ENCODE measurements at regions of chr14 and their contacts with region 1.

Region 1: GRCh38 chr14:74612350-74613021 is 449 bp upstream of the LTBP2 start:
- DNase-seq: peak; percentile 51
- ATAC-seq: peak; percentile 83
- H3K4me3 ChIP-seq: peak overlapping the region; percentile 57 to 86 (median 71)
- H3K27ac ChIP-seq: no peak overlapping the region
- H3K4me1 ChIP-seq: peaks cover 25% of the 10 kb centered on the region
- H3K27me3 ChIP-seq: peaks cover 1 to 19% of the 10 kb centered on the region in 2 experiments; a peak in 4 of 5 replicates
- CTCF ChIP-seq: peak; percentile 74
- EP300 ChIP-seq: no peak
- POLR2A ChIP-seq: no peak
- RAD21 ChIP-seq: peak; percentile 69

Region 2: GRCh38 chr14:74501135-74501614 is 111.3 kb before region 1 on chr14:
- CTCF ChIA-PET with region 1: interaction called, 7 read pairs
- POLR2A ChIA-PET with region 1: no interaction called
- in situ Hi-C with region 1: no loop called
- intact Hi-C with region 1: loop called (anchors 5 kb)
- DNase-seq: peak; percentile 52
- ATAC-seq: peak; percentile 82
- H3K4me3 ChIP-seq: no peak overlapping the region
- H3K27ac ChIP-seq: no peak overlapping the region
- H3K4me1 ChIP-seq: no peaks in the 10 kb centered on the region
- H3K27me3 ChIP-seq: peaks cover 0 to 16% of the 10 kb centered on the region in 2 experiments; a peak in 2 of 5 replicates
- CTCF ChIP-seq: peak; percentile 72
- EP300 ChIP-seq: no peak
- POLR2A ChIP-seq: no peak
- RAD21 ChIP-seq: peak; percentile 49; the same call in 1 of the 2 replicates

Region 3: GRCh38 chr14:74712499-74713394 is 100.3 kb after region 1 on chr14 and contains the starts of genes AREL1 and FCF1:
- CTCF ChIA-PET with region 1: interaction called, 8 read pairs
- POLR2A ChIA-PET with region 1: interaction called, 3 read pairs
- in situ Hi-C with region 1: no loop called
- intact Hi-C with region 1: loop called (anchors 1 kb)
- DNase-seq: peak; percentile 90
- ATAC-seq: peak; percentile 99
- H3K4me3 ChIP-seq: peak within 1 kb of the TSS; percentile 84 to 92 (median 86)
- H3K27ac ChIP-seq: peak within 1 kb of the TSS; percentile 65
- H3K4me1 ChIP-seq: peaks cover 38% of the 10 kb centered on the region
- H3K27me3 ChIP-seq: no peaks in the 10 kb centered on the region; a peak in 1 of 5 replicates
- CTCF ChIP-seq: no peak
- EP300 ChIP-seq: no peak
- POLR2A ChIP-seq: peak; percentile 81 to 84
- RAD21 ChIP-seq: no peak
- total RNA-seq, gene AREL1: 18.4 and 21.3 TPM in 2 replicates
- total RNA-seq, gene FCF1: 44.4 and 70.8 TPM in 2 replicates

Region 4: GRCh38 chr14:74793506-74794168 is 181.2 kb after region 1 on chr14:
- CTCF ChIA-PET with region 1: interaction called, 3 read pairs
- POLR2A ChIA-PET with region 1: no interaction called
- in situ Hi-C with region 1: loop called (anchors 25 kb)
- intact Hi-C with region 1: no loop called
- DNase-seq: no peak
- ATAC-seq: no peak
- H3K4me3 ChIP-seq: no peak overlapping the region
- H3K27ac ChIP-seq: no peak overlapping the region
- H3K4me1 ChIP-seq: no peaks in the 10 kb centered on the region
- H3K27me3 ChIP-seq: no peaks in the 10 kb centered on the region
- CTCF ChIP-seq: no peak
- EP300 ChIP-seq: no peak
- POLR2A ChIP-seq: no peak
- RAD21 ChIP-seq: no peak

Region 5: GRCh38 chr14:74804219-74804826 is 191.8 kb after region 1 on chr14:
- CTCF ChIA-PET with region 1: interaction called, 6 read pairs
- POLR2A ChIA-PET with region 1: no interaction called
- in situ Hi-C with region 1: loop called (anchors 25 kb)
- intact Hi-C with region 1: loop called (anchors 1 kb)
- DNase-seq: peak; percentile 26
- ATAC-seq: peak; percentile 77
- H3K4me3 ChIP-seq: no peak overlapping the region
- H3K27ac ChIP-seq: no peak overlapping the region
- H3K4me1 ChIP-seq: no peaks in the 10 kb centered on the region
- H3K27me3 ChIP-seq: no peaks in the 10 kb centered on the region
- CTCF ChIP-seq: peak; percentile 50
- EP300 ChIP-seq: no peak
- POLR2A ChIP-seq: no peak
- RAD21 ChIP-seq: no peak